Caco-2 (cell line): ENCODE measurements at regions of chr1 and their contacts with region 1.

Region 1: GRCh38 chr1:224213438-224214112 is 30.5 kb downstream of the DEGS1 start:
- DNase-seq: peak; percentile 76 to 91
- H3K4me3 ChIP-seq: no peak overlapping the region
- H3K4me3 Mint-ChIP-seq: no peak overlapping the region
- H3K27ac Mint-ChIP-seq: peak overlapping the region; percentile 83
- H3K4me1 ChIP-seq: peaks cover 63% of the 10 kb centered on the region
- H3K4me1 Mint-ChIP-seq: peaks cover 43% of the 10 kb centered on the region
- H3K27me3 ChIP-seq: no peaks in the 10 kb centered on the region
- H3K27me3 Mint-ChIP-seq: no peaks in the 10 kb centered on the region
- CTCF ChIP-seq: no peak

Region 2: GRCh38 chr1:223712194-223712849 is 501.3 kb before region 1 on chr1 and contains the start of gene CAPN2:
- CTCF ChIA-PET with region 1: no interaction called
- POLR2A ChIA-PET with region 1: no interaction called
- intact Hi-C with region 1: loop called (anchors 2 kb)
- DNase-seq: peak; percentile 69 to 91
- H3K4me3 ChIP-seq: peak within 1 kb of the TSS; percentile 97
- H3K4me3 Mint-ChIP-seq: peak within 1 kb of the TSS; percentile 73
- H3K27ac Mint-ChIP-seq: peak within 1 kb of the TSS; percentile 14
- H3K4me1 ChIP-seq: peaks cover 82% of the 10 kb centered on the region
- H3K4me1 Mint-ChIP-seq: peaks cover 54% of the 10 kb centered on the region
- H3K27me3 ChIP-seq: no peaks in the 10 kb centered on the region
- H3K27me3 Mint-ChIP-seq: no peaks in the 10 kb centered on the region
- CTCF ChIP-seq: peak; percentile 45 to 63
- total RNA-seq, gene CAPN2: 151 and 157 TPM in 2 replicates

Region 3: DNA sequence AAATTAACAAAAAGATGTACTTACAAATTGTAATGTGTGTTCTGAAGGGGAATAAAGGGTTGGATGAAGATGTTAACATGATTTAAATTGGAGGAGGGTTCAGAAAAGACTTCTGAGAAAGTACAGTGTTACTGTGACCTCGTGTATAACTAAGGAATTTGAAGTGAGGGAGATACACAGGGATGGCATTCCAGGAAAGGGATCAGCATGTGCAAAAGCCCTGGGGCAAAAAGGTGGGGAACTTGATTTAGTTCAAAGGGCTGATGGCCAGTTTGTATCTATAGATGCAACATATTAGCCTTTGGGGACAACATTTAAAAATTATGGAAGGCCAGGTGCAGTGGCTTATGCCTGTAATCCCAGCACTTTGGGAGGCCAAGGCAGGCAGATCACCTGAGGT is 63.9 kb before region 1 on chr1:
- CTCF ChIA-PET with region 1: no interaction called
- POLR2A ChIA-PET with region 1: no interaction called
- intact Hi-C with region 1: no loop called
- DNase-seq: peak; percentile 30 to 66
- H3K4me3 ChIP-seq: no peak overlapping the region
- H3K4me3 Mint-ChIP-seq: no peak overlapping the region
- H3K27ac Mint-ChIP-seq: no peak overlapping the region
- H3K4me1 ChIP-seq: 0 out of 2 replicates have a peak, but pooled peaks cover 7% of the 10 kb centered on the region
- H3K4me1 Mint-ChIP-seq: peaks cover 13% of the 10 kb centered on the region
- H3K27me3 ChIP-seq: no peaks in the 10 kb centered on the region
- H3K27me3 Mint-ChIP-seq: no peaks in the 10 kb centered on the region
- CTCF ChIP-seq: no peak

Region 4: DNA sequence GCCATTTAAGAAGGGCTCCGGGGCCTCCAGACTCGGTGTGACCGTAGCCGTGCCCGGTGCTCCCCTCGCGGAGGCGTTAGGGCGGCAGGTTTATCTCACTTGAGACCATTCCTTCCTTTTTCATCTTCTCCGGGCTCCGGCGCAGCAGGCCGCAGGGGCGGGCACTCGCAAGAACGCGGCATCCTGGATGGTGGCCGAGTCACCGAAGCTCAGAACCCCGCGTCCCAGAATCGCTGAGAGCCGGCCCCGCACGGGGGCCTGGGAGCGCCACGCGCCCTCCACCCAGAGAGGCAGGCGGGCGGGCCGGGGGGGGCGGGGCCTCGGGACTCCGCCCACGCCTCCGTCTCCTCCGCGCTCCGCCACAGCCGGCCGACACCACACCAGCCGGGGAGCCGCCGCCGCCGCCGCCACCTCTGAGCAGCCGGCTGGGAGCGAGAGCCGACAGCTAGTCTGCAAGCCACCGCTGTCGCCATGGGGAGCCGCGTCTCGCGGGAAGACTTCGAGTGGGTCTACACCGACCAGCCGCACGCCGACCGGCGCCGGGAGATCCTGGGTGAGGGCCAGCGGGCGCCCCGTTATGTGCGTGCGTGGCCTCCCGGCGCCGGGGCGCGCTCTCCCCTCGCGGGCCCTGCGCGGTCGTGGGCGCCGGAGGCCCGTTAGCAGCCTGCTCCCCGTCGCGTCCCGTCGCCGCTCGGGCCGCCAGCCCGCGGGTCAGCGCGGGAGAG is 30.5 kb before region 1 on chr1 and contains the start of gene DEGS1:
- CTCF ChIA-PET with region 1: interaction called, 7 read pairs
- POLR2A ChIA-PET with region 1: interaction called, 3 read pairs
- intact Hi-C with region 1: loop called (anchors 1 kb)
- DNase-seq: peak; percentile 93
- H3K4me3 ChIP-seq: peak within 1 kb of the TSS; percentile 92
- H3K4me3 Mint-ChIP-seq: peak within 1 kb of the TSS; percentile 83
- H3K27ac Mint-ChIP-seq: peak within 1 kb of the TSS; percentile 89
- H3K4me1 ChIP-seq: peaks cover 6% of the 10 kb centered on the region
- H3K4me1 Mint-ChIP-seq: peaks cover 13% of the 10 kb centered on the region
- H3K27me3 ChIP-seq: no peaks in the 10 kb centered on the region
- H3K27me3 Mint-ChIP-seq: no peaks in the 10 kb centered on the region
- CTCF ChIP-seq: peak in 1 of 2 experiments; percentile 17
- total RNA-seq, gene DEGS1: 38.8 and 39.2 TPM in 2 replicates